BJ (cell line): ENCODE measurements at regions of chr3 and their contacts with region 1.

Region 1: GRCh38 chr3:124761250-124761796 is 31.1 kb downstream of the UMPS start:
- DNase-seq: peak; percentile 49
- H3K4me3 ChIP-seq: no peak overlapping the region
- H3K27me3 ChIP-seq: no peaks in the 10 kb centered on the region
- CTCF ChIP-seq: peak; percentile 96

Region 2: GRCh38 chr3:124780761-124781475 is 19.6 kb after region 1 on chr3:
- CTCF ChIA-PET with region 1: interaction called, 42 read pairs
- POLR2A ChIA-PET with region 1: no interaction called
- DNase-seq: no peak
- H3K4me3 ChIP-seq: no peak overlapping the region
- H3K27me3 ChIP-seq: no peaks in the 10 kb centered on the region
- CTCF ChIP-seq: no peak

Region 3: GRCh38 chr3:124786441-124787241 is 25.3 kb after region 1 on chr3:
- CTCF ChIA-PET with region 1: interaction called, 42 read pairs
- POLR2A ChIA-PET with region 1: interaction called, 4 read pairs
- DNase-seq: no peak
- H3K4me3 ChIP-seq: no peak overlapping the region
- H3K27me3 ChIP-seq: no peaks in the 10 kb centered on the region
- CTCF ChIP-seq: peak; percentile 45

Region 4: DNA sequence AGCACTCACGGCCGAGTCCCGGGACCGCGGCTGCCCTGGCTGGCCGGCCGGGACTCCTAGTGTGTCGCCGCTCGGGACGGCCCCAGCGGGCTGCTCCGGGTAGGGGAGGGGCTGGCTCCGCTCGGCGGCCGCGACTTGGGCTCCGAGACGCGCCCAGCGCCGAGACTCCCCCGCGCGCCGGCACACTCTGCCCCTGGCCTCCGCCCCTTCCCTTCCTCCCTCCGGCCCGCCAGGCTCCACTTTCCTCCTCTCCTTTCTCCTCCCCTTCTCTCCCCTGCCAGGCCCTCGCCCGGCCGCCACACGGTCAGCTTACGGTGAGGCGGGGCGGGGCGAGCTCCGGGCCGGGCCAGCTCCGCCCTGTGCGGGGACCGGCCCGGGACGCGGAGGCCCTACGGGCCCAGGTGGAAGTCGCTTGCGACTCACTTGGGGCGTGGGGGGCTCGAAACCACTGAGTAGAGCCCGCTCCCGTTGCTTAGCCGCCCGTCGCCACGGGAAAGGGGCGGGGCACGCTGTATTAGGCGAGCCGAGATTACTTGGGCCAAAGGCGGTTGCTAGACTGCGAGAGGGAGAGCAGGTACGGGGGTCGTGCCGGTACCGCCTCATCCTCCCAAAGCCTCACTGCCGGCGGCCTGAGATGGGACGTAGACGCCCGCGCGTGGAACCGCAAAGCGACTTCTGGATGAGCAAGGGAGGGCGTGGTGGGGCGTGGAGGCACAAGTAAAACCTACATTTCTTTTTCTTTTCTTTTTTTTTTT is 126.0 kb after region 1 on chr3 and contains the start of gene ITGB5:
- CTCF ChIA-PET with region 1: interaction called, 43 read pairs
- POLR2A ChIA-PET with region 1: no interaction called
- DNase-seq: peak; percentile 36
- H3K4me3 ChIP-seq: peak within 1 kb of the TSS; percentile 72
- H3K27me3 ChIP-seq: no peaks in the 10 kb centered on the region
- CTCF ChIP-seq: no peak
- polyA plus RNA-seq, gene ITGB5: 223 and 393 TPM in 2 replicates

Region 5: DNA sequence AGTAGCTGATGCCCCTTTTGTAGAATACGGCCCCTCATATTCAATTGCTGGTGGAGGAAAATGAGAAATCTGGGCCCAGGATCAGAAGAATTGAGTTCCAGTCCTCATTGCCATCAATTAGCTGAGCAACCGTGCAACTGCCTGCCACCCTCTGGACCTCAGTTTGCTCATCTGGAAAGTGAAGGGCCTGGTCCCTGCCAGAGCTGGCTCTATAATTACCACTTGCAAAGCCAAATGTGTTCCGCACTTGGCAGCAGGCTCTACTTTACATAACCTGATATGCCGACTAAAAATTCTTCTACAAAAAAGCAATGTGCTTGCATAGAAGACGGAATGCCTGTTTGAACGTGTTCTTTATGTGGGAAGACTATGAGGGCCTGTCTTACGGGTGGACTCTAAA is 134.4 kb after region 1 on chr3:
- CTCF ChIA-PET with region 1: interaction called, 223 read pairs
- POLR2A ChIA-PET with region 1: interaction called, 23 read pairs
- DNase-seq: no peak
- H3K4me3 ChIP-seq: no peak overlapping the region
- H3K27me3 ChIP-seq: no peaks in the 10 kb centered on the region
- CTCF ChIP-seq: no peak

Region 6: DNA sequence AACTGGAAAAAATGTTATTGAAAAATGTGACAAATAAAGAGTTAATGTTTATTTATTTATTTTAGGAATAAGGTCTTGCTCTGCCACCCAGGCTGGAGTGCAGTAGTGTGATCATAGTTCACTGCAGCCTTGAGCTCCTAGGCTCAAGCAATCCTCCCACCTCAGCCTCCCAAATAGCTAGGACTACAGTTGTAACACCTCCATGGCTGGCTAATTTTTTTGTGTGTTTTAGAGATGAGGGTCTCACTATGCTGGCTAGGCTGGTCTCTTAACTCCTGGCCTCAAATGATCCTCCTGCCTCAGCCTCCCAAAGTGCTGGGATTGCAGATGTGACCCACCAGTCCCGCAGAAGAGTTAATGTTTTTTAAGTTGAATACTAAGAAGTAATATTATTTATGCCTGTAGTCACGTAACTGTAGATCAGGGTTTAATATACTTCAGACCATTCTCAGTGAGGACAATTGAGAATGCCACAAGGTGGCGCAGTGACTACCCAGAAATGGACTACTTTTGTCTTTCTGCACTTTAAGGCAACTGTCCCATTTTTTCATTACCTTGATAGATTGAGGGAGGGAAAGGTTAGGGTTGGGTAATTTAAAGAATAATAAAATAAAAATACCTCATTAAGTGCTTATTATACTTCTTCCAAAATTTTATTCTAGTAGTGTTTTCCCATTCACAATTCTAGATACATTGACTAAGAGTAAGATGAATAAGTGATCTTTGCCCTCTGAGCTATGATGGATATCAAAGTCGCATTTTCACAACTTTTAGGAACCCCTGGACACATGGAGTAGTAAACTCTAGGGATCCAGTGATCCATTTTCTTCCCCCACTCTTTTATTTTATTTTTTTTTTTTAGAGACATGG is 167.2 kb after region 1 on chr3:
- CTCF ChIA-PET with region 1: interaction called, 13 read pairs
- POLR2A ChIA-PET with region 1: no interaction called
- DNase-seq: no peak
- H3K4me3 ChIP-seq: no peak overlapping the region
- H3K27me3 ChIP-seq: no peaks in the 10 kb centered on the region
- CTCF ChIP-seq: peak; percentile 76

Region 7: DNA sequence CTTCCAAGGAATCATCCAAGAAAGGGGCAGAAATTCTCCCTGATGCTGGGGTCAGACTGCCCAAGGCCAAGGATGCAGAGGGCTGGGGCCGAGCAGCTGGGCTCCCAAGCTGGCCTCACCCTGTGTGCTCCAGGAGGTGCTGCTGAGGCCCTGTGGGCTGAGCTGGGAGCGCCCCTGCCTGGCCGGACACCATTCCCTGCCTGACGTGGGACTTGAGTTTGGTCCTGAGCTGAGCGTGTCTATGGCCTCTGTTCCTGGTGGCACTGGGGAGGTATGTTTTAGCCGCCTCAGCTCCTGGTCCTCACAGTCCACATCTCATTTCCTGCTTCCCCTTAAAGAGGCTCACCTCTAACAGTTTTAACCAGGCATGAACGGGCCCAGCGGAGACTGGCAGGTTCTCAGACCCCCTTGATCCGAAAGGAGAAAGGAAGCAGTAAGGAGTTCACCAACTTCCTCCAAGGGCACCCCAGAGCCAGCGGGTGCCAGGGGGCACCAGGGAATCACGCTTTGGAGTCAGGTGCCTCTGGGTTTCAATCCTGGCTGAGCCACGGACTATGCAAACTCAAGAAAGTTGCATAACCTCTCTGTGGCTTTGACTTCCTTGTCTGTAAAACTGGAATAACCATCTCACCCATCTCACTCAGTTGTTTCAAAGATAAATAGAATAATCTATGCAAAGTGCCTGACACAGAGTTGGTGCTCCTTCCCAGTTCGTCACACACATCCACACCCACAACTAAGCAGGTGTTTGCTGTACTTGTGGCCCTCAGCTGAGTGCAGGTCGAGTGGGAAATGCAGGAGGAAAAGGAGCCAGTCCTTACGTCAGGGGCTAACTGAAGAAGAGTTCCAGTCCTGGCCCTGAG is 402.6 kb after region 1 on chr3:
- CTCF ChIA-PET with region 1: no interaction called
- POLR2A ChIA-PET with region 1: no interaction called
- DNase-seq: no peak
- H3K4me3 ChIP-seq: no peak overlapping the region
- H3K27me3 ChIP-seq: no peaks in the 10 kb centered on the region
- CTCF ChIP-seq: peak; percentile 24